Ascending aorta (tissue), 2 donors: ENCODE measurements at regions of chr1 and their contacts with region 1.

Region 1: GRCh38 chr1:212608209-212608955 is at the start of gene ATF3:
- DNase-seq: peak; percentile 99 to 100
- H3K4me3 ChIP-seq: peak within 1 kb of the TSS; percentile 64 to 78
- H3K27ac ChIP-seq: peak within 1 kb of the TSS; percentile 96 to 99
- H3K4me1 ChIP-seq: peaks cover 0 to 25% of the 10 kb centered on the region in 2 donors
- H3K27me3 ChIP-seq: no peaks in the 10 kb centered on the region
- CTCF ChIP-seq: no peak
- total RNA-seq, gene ATF3: 79.1 TPM

Region 2: GRCh38 chr1:212469701-212470458 is 138.5 kb before region 1 on chr1:
- intact Hi-C with region 1: loop called (anchors 1 kb)
- DNase-seq: peak; percentile 89 to 98
- H3K4me3 ChIP-seq: peak overlapping the region in 1 of 2 donors; percentile 42
- H3K27ac ChIP-seq: peak overlapping the region; percentile 79 to 81
- H3K4me1 ChIP-seq: peaks cover 4 to 10% of the 10 kb centered on the region in 2 donors
- H3K27me3 ChIP-seq: no peaks in the 10 kb centered on the region
- CTCF ChIP-seq: no peak